A549 (cell line): ENCODE measurements at regions of chr19 and their contacts with region 1.

Region 1: DNA sequence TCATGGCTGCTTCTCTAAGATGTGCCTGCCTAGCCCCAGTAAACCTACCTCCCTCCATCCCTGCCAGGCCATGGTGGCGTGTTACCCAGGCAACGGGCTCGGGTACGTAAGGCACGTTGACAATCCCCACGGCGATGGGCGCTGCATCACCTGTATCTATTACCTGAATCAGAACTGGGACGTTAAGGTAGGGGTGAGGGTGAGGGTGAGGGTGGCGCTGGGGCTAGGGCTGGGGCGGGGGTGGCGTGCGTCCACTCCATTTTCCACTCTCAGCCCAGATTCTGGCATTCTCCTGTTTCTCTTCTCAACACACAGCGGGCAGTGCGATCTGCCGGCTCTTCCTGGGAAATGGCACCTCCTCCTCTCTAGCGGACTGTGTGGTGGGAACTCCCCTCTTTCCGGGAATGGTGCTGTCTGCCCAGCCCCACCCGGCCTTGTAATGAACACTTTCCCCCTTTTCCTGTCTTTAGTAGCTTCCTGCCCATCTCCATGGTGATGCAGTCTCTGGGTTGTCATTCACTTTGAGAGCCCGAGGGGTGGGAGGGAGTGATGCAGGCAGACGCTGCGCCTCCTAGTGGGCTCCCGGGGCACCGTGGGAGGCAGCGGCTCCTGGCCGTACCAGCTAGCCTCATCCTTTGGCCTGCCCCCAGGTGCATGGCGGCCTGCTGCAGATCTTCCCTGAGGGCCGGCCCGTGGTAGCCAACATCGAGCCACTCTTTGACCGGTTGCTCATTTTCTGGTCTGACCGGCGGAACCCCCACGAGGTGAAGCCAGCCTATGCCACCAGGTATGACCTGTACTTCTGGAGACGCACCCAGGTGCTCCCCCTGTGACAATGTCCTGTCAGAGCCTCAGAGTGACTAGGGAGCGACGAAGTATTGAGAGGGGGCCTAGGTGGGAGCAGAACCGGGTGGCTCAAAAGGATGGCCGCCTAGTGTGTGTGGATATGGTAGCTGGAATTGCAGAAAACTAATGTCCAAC is 7.8 kb downstream of the EGLN2 start:
- DNase-seq: peak; percentile 90 to 100
- ATAC-seq: peak; percentile 58 to 81
- H3K4me3 ChIP-seq: no peak overlapping the region
- H3K27ac ChIP-seq: no peak overlapping the region
- H3K4me1 ChIP-seq: peaks cover 43% of the 10 kb centered on the region
- CTCF ChIP-seq: peak; percentile 78
- EP300 ChIP-seq: no peak
- POLR2A ChIP-seq: no peak
- RAD21 ChIP-seq: peak; percentile 62 to 63

Region 2: GRCh38 chr19:40658031-40658430 is 148.7 kb before region 1 on chr19:
- CTCF ChIA-PET with region 1: interaction called, 162 read pairs
- POLR2A ChIA-PET with region 1: interaction called, 5 read pairs
- DNase-seq: no peak
- ATAC-seq: no peak
- H3K4me3 ChIP-seq: no peak overlapping the region
- H3K27ac ChIP-seq: no peak overlapping the region
- H3K4me1 ChIP-seq: 0 out of 3 replicates have a peak, but pooled peaks cover 3% of the 10 kb centered on the region
- CTCF ChIP-seq: no peak
- EP300 ChIP-seq: no peak
- POLR2A ChIP-seq: no peak
- RAD21 ChIP-seq: no peak

Region 3: DNA sequence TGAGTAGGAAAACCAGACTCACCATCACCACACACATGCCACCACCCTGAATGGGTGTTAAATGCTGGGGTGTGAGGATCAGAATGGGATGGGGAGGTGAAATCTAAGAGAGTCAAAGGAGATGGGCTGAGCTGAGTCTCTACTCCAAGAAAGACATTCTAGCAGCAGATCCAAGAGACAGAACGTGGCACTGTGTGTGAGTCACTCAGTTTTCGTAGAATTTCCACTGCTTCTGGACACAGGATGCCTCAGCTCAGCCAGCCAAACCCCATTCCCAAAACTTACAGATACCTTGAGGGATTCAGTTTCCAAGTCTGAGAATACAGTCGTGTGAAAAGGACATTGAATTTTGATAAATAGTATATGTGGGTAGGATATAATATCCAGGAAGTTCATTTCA is 82.6 kb after region 1 on chr19:
- CTCF ChIA-PET with region 1: no interaction called
- POLR2A ChIA-PET with region 1: no interaction called
- DNase-seq: no peak
- ATAC-seq: peak in 1 of 2 experiments; percentile 53; a peak in 3 of 6 replicates
- H3K4me3 ChIP-seq: no peak overlapping the region
- H3K27ac ChIP-seq: peak overlapping the region in 1 of 2 experiments; percentile 14; a peak in 1 of 6 replicates
- H3K4me1 ChIP-seq: 0 out of 3 replicates have a peak, but pooled peaks cover 9% of the 10 kb centered on the region
- CTCF ChIP-seq: no peak
- EP300 ChIP-seq: no peak
- POLR2A ChIP-seq: no peak
- RAD21 ChIP-seq: no peak

Region 4: GRCh38 chr19:41154060-41154459 is 347.3 kb after region 1 on chr19:
- CTCF ChIA-PET with region 1: no interaction called
- POLR2A ChIA-PET with region 1: no interaction called
- DNase-seq: no peak
- ATAC-seq: no peak
- H3K4me3 ChIP-seq: no peak overlapping the region
- H3K27ac ChIP-seq: no peak overlapping the region
- H3K4me1 ChIP-seq: peaks cover 4% of the 10 kb centered on the region
- CTCF ChIP-seq: no peak
- EP300 ChIP-seq: no peak
- POLR2A ChIP-seq: no peak
- RAD21 ChIP-seq: no peak